ENCODE measurements at regions of chr5 and their contacts with region 1.

Region 1: GRCh38 chr5:72307968-72308852 is 11.8 kb downstream of the MRPS27 start:
- DNase-seq: peak; percentile 97
- H3K4me3 ChIP-seq: peak overlapping the region; percentile 84
- H3K27ac ChIP-seq: peak overlapping the region; percentile 84
- H3K4me1 ChIP-seq: peaks cover 50% of the 10 kb centered on the region
- CTCF ChIP-seq: peak; percentile 90

Region 2: GRCh38 chr5:71778678-71779276 is 529.4 kb before region 1 on chr5:
- CTCF ChIA-PET with region 1: no interaction called
- POLR2A ChIA-PET with region 1: no interaction called
- intact Hi-C with region 1: loop called (anchors 10 kb)
- DNase-seq: peak; percentile 59
- H3K4me3 ChIP-seq: no peak overlapping the region
- H3K27ac ChIP-seq: no peak overlapping the region
- H3K4me1 ChIP-seq: peaks cover 9% of the 10 kb centered on the region
- CTCF ChIP-seq: peak; percentile 94

Region 3: GRCh38 chr5:72137826-72138409 is 170.3 kb before region 1 on chr5:
- CTCF ChIA-PET with region 1: interaction called, 3 read pairs
- POLR2A ChIA-PET with region 1: interaction called, 3 read pairs
- intact Hi-C with region 1: loop called (anchors 1 kb)
- DNase-seq: peak; percentile 40
- H3K4me3 ChIP-seq: no peak overlapping the region
- H3K27ac ChIP-seq: no peak overlapping the region
- H3K4me1 ChIP-seq: no peaks in the 10 kb centered on the region
- CTCF ChIP-seq: peak; percentile 88

Region 4: DNA sequence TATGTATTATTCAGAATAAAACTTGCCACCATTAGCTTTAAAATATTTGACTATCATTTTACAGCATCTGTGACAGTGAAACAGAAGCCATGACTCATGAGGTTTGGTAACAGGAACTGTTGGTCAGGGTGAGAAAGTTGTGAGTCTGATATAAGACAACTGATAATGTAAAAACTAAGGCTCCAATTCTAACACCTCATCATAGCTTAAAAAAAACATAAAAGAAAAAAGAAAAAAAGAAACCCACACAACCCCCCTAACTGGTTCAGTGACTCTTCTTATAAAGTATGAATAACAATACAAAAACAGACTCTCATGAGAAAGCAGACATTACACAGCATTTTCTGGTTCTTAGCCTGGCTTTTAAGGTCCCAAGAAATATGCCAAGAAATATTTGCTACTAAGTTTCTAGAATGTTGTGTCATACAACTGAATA is 73.9 kb before region 1 on chr5:
- CTCF ChIA-PET with region 1: no interaction called
- POLR2A ChIA-PET with region 1: no interaction called
- intact Hi-C with region 1: loop called (anchors 5 kb)
- DNase-seq: no peak
- H3K4me3 ChIP-seq: no peak overlapping the region
- H3K27ac ChIP-seq: no peak overlapping the region
- H3K4me1 ChIP-seq: peaks cover 21% of the 10 kb centered on the region
- CTCF ChIP-seq: no peak

Region 5: DNA sequence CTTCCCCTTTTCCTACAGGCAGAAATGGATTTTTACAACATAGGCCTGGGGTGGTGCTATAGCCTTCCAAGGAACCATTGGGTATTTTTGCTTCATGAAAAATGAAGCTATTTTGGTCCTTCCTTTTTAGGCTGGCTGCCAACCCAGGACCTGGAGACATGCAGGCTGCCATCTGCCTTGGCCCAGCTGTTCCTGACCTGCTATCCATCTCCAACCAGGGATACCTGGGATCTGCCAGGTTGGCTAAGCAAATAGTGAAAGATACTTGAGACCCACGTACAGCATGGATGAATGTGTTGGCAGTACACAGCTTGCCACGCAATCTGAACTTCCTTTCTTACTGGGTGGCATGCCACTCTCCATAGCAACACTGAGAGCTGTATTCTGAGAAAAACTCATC is 19.3 kb before region 1 on chr5:
- CTCF ChIA-PET with region 1: interaction called, 5 read pairs
- POLR2A ChIA-PET with region 1: interaction called, 97 read pairs
- intact Hi-C with region 1: loop called (anchors 2 kb)
- DNase-seq: no peak
- H3K4me3 ChIP-seq: no peak overlapping the region
- H3K27ac ChIP-seq: no peak overlapping the region
- H3K4me1 ChIP-seq: peaks cover 85% of the 10 kb centered on the region
- CTCF ChIP-seq: no peak

Region 6: GRCh38 chr5:72319976-72320752 is 12.0 kb after region 1 on chr5 and contains the starts of genes MRPS27 and PTCD2:
- CTCF ChIA-PET with region 1: interaction called, 3 read pairs
- POLR2A ChIA-PET with region 1: interaction called, 78 read pairs
- intact Hi-C with region 1: loop called (anchors 1 kb)
- DNase-seq: peak; percentile 99
- H3K4me3 ChIP-seq: peak within 1 kb of the TSS; percentile 89
- H3K27ac ChIP-seq: peak within 1 kb of the TSS; percentile 63
- H3K4me1 ChIP-seq: peaks cover 34% of the 10 kb centered on the region
- CTCF ChIP-seq: peak; percentile 67
- total RNA-seq, gene MRPS27: 54.1 and 62.6 TPM in 2 replicates
- total RNA-seq, gene PTCD2: 11.7 and 14.1 TPM in 2 replicates

Region 7: DNA sequence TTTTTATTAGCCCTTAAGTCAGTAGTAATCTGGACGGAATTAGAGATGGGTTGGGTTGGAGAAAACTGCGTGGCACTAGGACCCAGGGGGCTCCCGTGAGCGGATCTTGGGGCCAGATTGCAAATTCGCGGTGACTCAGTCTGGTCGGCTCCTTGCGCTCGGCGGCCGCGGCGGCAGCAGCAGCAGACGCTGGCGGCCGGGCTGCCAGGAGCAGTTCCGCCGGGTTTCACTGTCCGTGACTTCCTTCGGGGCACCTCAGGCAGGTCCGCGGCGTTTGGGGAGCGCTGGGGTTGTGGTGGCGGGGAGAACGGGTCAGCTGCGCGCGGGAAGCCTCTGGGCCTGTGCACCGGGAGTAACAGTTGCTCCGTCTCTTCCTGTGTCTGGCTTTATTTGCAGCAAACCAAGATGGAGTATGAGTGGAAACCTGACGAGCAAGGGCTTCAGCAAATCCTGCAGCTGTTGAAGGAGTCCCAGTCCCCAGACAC is 539.8 kb after region 1 on chr5:
- CTCF ChIA-PET with region 1: no interaction called
- POLR2A ChIA-PET with region 1: no interaction called
- intact Hi-C with region 1: loop called (anchors 5 kb)
- DNase-seq: peak; percentile 90
- H3K4me3 ChIP-seq: peak overlapping the region; percentile 99
- H3K27ac ChIP-seq: peak overlapping the region; percentile 93
- H3K4me1 ChIP-seq: peaks cover 39% of the 10 kb centered on the region
- CTCF ChIP-seq: no peak